ENCODE measurements at regions of chr19 and their contacts with region 1.

Region 1: GRCh38 chr19:16771618-16772017 is 52.0 kb downstream of the NWD1 start:
- DNase-seq: peak; percentile 83 to 84
- ATAC-seq: peak; percentile 87
- H3K4me3 ChIP-seq: no peak overlapping the region
- H3K27ac ChIP-seq: no peak overlapping the region
- H3K4me1 ChIP-seq: no peaks in the 10 kb centered on the region
- H3K27me3 ChIP-seq: no peaks in the 10 kb centered on the region

Region 2: GRCh38 chr19:16714702-16715287 is 56.8 kb before region 1 on chr19:
- intact Hi-C with region 1: loop called in 1 of 2 experiments (anchors 5 kb)
- DNase-seq: peak; percentile 56 to 86
- ATAC-seq: peak; percentile 77
- H3K4me3 ChIP-seq: no peak overlapping the region
- H3K27ac ChIP-seq: no peak overlapping the region
- H3K4me1 ChIP-seq: no peaks in the 10 kb centered on the region
- H3K27me3 ChIP-seq: no peaks in the 10 kb centered on the region

Region 3: GRCh38 chr19:16829010-16829821 is 57.6 kb after region 1 on chr19 and contains the start of gene SIN3B:
- intact Hi-C with region 1: loop called in 1 of 2 experiments (anchors 5 kb)
- DNase-seq: peak; percentile 87 to 96
- ATAC-seq: peak; percentile 91
- H3K4me3 ChIP-seq: peak within 1 kb of the TSS; percentile 95 to 96
- H3K27ac ChIP-seq: no peak within 1 kb of the TSS
- H3K4me1 ChIP-seq: peaks cover 0 to 2% of the 10 kb centered on the region in 2 donors
- H3K27me3 ChIP-seq: no peaks in the 10 kb centered on the region
- total RNA-seq, gene SIN3B: 61.1 to 82.7 TPM

Region 4: DNA sequence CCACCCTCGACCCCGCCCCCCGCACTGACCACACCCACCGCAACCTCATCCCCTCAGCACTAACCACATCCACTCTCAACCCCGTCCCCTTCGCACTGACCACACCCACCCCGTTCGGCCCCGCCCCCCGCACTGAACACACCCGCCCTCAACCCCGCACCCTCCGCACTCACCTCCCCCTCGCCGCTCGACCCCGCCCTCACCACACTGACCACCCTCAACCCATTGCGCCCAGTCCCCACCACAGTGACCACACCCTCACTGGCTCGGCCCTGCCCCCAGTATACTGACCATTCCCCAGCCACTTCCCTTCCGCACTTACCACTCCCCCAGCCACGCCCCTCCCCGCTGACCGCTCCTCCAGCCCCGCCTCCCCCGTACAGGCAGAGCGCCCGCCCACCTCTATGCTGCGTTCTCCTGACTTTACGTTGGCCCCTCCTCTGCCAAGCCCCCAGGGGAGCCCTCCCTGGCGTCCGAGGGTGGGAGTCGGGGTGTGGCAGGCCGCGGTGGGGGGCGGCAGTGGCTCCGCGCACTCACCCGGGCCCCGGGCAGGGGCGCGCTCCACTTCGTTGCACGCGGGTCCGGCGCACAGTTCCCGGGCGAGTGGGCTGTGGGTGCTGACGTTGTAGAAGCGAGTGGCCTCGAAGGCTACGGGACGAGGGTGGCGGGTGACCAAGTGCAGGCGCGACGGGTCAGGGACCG is 125.7 kb after region 1 on chr19:
- intact Hi-C with region 1: loop called in 1 of 2 experiments (anchors 10 kb)
- DNase-seq: peak; percentile 97 to 98
- ATAC-seq: peak; percentile 93
- H3K4me3 ChIP-seq: peak overlapping the region; percentile 28
- H3K27ac ChIP-seq: peak overlapping the region in 1 of 2 donors; percentile 8
- H3K4me1 ChIP-seq: no peaks in the 10 kb centered on the region
- H3K27me3 ChIP-seq: no peaks in the 10 kb centered on the region

Region 5: DNA sequence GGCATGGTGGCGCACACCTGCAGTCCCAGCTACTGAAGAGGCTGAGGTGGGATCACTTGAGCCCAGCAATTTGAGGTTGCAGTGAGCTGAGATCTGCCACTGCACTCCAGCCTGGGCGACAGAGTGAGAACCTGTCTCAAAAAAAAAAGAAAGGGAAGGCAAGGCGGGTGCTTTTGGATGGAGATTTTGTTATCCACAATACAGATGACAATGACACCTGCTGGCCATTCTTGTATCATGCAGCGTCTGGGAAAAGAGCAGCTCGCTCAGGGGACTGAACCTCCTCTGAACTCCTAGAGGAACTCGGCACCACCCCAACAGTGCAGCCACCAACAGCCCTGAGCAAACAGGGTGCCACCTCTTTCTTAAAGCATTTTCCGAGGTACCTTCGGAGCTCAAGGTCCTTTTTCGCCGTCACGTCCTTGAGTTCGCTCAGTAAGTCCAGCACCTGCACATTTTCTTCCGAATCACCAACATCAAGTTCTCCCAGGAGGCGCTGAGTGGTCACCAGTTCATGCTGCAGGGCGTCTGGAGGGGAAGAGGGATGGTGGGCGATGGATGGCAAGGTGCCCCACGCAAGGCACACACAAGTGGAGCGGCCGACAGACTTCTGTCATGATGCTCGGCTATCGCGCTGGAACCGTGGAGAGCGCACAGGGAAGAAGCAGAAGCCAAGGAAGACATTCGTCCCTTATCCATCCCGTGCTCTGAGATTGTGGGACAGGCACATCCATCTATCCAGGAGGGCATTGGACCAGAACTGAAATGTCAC is 281.0 kb after region 1 on chr19:
- intact Hi-C with region 1: loop called (anchors 5 kb)
- DNase-seq: no peak
- ATAC-seq: peak; percentile 66
- H3K4me3 ChIP-seq: no peak overlapping the region
- H3K27ac ChIP-seq: no peak overlapping the region
- H3K4me1 ChIP-seq: no peaks in the 10 kb centered on the region
- H3K27me3 ChIP-seq: no peaks in the 10 kb centered on the region

Measured in aorta (tissue), 5 donors.